ENCODE measurements at regions of chr10 and their contacts with region 1.

Region 1: GRCh38 chr10:50312464-50313437 is 61.4 kb upstream of the ASAH2 start:
- DNase-seq: no peak
- ATAC-seq: no peak
- H3K4me3 ChIP-seq: no peak overlapping the region
- H3K27ac ChIP-seq: no peak overlapping the region
- H3K4me1 ChIP-seq: peaks cover 6% of the 10 kb centered on the region; the same call in 1 of the 2 replicates
- H3K27me3 ChIP-seq: no peaks in the 10 kb centered on the region
- CTCF ChIP-seq: no peak
- EP300 ChIP-seq: no peak
- POLR2A ChIP-seq: no peak
- RAD21 ChIP-seq: no peak

Region 2: DNA sequence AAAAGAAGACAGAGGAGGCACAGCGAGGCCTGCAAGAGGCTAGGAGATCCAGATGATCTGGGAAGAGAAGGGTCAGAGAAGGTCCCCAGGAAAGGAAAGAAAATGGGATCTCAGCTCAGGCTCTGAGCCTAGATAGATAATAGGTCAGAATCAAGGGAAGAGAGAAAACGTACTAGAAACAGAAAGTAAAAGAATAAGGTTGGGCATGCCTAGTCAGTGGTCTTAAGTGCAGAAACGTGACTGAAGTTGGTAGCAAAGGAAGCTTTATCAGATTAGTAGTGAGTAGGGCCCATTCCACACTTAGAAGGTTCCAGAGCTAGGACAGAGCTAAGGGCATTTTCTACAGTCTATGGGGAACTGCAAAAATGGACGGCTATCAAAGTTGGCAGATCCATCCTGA is 23.4 kb after region 1 on chr10:
- CTCF ChIA-PET with region 1: no interaction called
- POLR2A ChIA-PET with region 1: no interaction called
- RAD21 ChIA-PET with region 1: no interaction called
- SMC1A ChIA-PET with region 1: interaction called, 14 read pairs
- in situ Hi-C with region 1: no loop called
- intact Hi-C with region 1: no loop called
- DNase-seq: no peak
- ATAC-seq: peak; percentile 67
- H3K4me3 ChIP-seq: no peak overlapping the region
- H3K27ac ChIP-seq: peak overlapping the region; percentile 4; the same call in 1 of the 2 replicates
- H3K4me1 ChIP-seq: no peaks in the 10 kb centered on the region
- H3K27me3 ChIP-seq: no peaks in the 10 kb centered on the region
- CTCF ChIP-seq: no peak
- EP300 ChIP-seq: no peak
- POLR2A ChIP-seq: no peak
- RAD21 ChIP-seq: no peak